Naive thymus-derived CD4-positive, alpha-beta T cell (primary cell): ENCODE measurements at regions of chr2 and their contacts with region 1.

Region 1: DNA sequence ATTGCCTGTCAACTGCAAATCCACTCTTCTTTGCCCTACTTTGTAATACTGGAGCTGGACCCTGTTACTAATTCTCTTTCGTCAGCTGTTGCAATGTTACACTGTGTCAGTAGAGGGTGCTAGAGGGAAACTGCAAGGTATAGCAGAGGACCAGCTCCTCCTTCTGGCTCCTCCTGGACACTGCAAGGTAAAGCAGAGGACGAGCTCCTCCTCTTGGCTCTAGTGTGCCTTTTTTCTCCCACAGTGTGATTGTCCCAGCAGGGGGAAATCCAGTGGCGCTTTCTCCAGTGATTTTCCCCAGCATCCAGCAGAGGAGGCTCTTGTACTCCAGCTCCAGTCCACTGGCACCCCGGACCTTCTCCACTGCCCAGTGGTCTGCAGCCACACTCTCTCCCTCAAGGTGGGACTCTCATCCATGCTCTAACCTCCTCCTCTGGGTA is 95.6 kb downstream of the CAPN13 start:
- DNase-seq: peak; percentile 50 to 89 (median 86)
- ATAC-seq: peak; percentile 96
- H3K4me3 ChIP-seq: no peak overlapping the region
- H3K4me3 Mint-ChIP-seq: no peak overlapping the region
- H3K27ac ChIP-seq: no peak overlapping the region
- H3K27ac Mint-ChIP-seq: peak overlapping the region in 1 of 9 donors; percentile 8
- H3K4me1 ChIP-seq: no peaks in the 10 kb centered on the region
- H3K4me1 Mint-ChIP-seq: peaks cover 0 to 8% (median 5%) of the 10 kb centered on the region in 7 donors
- H3K27me3 ChIP-seq: no peaks in the 10 kb centered on the region
- H3K27me3 Mint-ChIP-seq: peaks cover 0 to 4% (median 0%) of the 10 kb centered on the region in 5 donors

Region 2: DNA sequence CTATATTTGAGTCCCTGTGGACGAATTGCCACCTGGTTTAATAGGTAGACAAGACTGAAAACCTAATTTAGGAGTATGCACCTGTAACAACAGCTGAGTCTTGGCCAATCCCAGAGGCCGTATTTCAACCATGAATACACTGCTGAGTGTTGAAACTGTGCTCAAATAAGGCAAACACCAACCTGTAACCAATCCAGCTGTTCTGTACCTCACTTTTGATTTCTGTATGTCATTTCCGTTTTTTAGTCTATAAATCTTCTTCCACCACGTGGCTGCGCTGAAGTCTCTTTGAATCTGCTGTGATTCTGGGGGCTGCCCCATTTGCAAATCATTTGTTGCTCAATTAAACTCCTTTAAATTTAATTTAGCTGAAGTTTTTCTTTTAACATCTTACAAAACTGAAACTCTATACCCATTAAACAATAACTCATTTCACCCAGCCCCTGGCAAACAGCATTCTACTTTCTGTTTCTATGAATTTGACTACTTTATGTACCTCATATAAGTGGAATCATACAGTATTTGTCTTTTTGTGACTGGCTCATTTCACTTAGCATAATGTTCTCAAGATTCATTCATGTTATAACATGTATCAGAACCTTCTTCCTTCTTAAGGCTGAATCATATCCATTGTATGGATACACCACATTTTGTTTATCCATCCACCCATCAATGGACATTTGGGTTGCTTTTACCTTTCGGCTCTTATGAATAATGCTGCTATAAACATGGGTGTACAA is 572.4 kb before region 1 on chr2:
- CTCF ChIA-PET with region 1: interaction called, 14 read pairs
- POLR2A ChIA-PET with region 1: no interaction called
- intact Hi-C with region 1: loop called in 1 of 2 experiments (anchors 2 kb)
- DNase-seq: peak in 7 of 9 donors; percentile 45 to 71 (median 63)
- ATAC-seq: peak; percentile 77
- H3K4me3 ChIP-seq: no peak overlapping the region
- H3K4me3 Mint-ChIP-seq: peak overlapping the region in 8 of 10 donors; percentile 1 to 59 (median 45)
- H3K27ac ChIP-seq: peak overlapping the region; percentile 42
- H3K27ac Mint-ChIP-seq: peak overlapping the region; percentile 57 to 83 (median 66)
- H3K4me1 ChIP-seq: peaks cover 0 to 10% of the 10 kb centered on the region in 2 donors
- H3K4me1 Mint-ChIP-seq: peaks cover 12 to 32% (median 21%) of the 10 kb centered on the region in 7 donors
- H3K27me3 ChIP-seq: no peaks in the 10 kb centered on the region
- H3K27me3 Mint-ChIP-seq: peaks cover 0 to 13% (median 0%) of the 10 kb centered on the region in 5 donors

Region 3: GRCh38 chr2:30208452-30208851 is 503.2 kb before region 1 on chr2:
- CTCF ChIA-PET with region 1: interaction called, 189 read pairs
- POLR2A ChIA-PET with region 1: interaction called, 11 read pairs
- intact Hi-C with region 1: loop called (anchors 1 kb)
- DNase-seq: peak in 4 of 9 donors; percentile 19 to 42 (median 28)
- ATAC-seq: peak; percentile 69
- H3K4me3 ChIP-seq: peak overlapping the region; percentile 3
- H3K4me3 Mint-ChIP-seq: peak overlapping the region; percentile 14 to 80 (median 68)
- H3K27ac ChIP-seq: peak overlapping the region; percentile 25
- H3K27ac Mint-ChIP-seq: peak overlapping the region in 8 of 9 donors; percentile 82 to 95 (median 88)
- H3K4me1 ChIP-seq: peaks cover 8 to 33% of the 10 kb centered on the region in 2 donors
- H3K4me1 Mint-ChIP-seq: peaks cover 14 to 44% (median 35%) of the 10 kb centered on the region in 7 donors
- H3K27me3 ChIP-seq: no peaks in the 10 kb centered on the region
- H3K27me3 Mint-ChIP-seq: peaks cover 0 to 7% (median 0%) of the 10 kb centered on the region in 5 donors

Region 4: GRCh38 chr2:30336978-30337841 is 374.5 kb before region 1 on chr2:
- CTCF ChIA-PET with region 1: interaction called, 13 read pairs
- POLR2A ChIA-PET with region 1: no interaction called
- intact Hi-C with region 1: loop called (anchors 1 to 10 kb)
- DNase-seq: peak; percentile 11 to 74 (median 69)
- ATAC-seq: peak; percentile 89
- H3K4me3 ChIP-seq: peak overlapping the region; percentile 46
- H3K4me3 Mint-ChIP-seq: peak overlapping the region; percentile 69 to 92 (median 85)
- H3K27ac ChIP-seq: peak overlapping the region; percentile 71
- H3K27ac Mint-ChIP-seq: peak overlapping the region; percentile 95 to 100 (median 98)
- H3K4me1 ChIP-seq: peaks cover 60 to 71% of the 10 kb centered on the region in 2 donors
- H3K4me1 Mint-ChIP-seq: peaks cover 57 to 87% (median 84%) of the 10 kb centered on the region in 7 donors
- H3K27me3 ChIP-seq: no peaks in the 10 kb centered on the region
- H3K27me3 Mint-ChIP-seq: no peaks in the 10 kb centered on the region

Region 5: GRCh38 chr2:30862054-30862651 is 150.5 kb after region 1 on chr2:
- CTCF ChIA-PET with region 1: interaction called, 10 read pairs
- POLR2A ChIA-PET with region 1: no interaction called
- intact Hi-C with region 1: loop called in 1 of 2 experiments (anchors 1 kb)
- DNase-seq: peak in 6 of 9 donors; percentile 2 to 40 (median 26)
- ATAC-seq: peak; percentile 73
- H3K4me3 ChIP-seq: no peak overlapping the region
- H3K4me3 Mint-ChIP-seq: no peak overlapping the region
- H3K27ac ChIP-seq: no peak overlapping the region
- H3K27ac Mint-ChIP-seq: no peak overlapping the region
- H3K4me1 ChIP-seq: no peaks in the 10 kb centered on the region
- H3K4me1 Mint-ChIP-seq: peaks cover 0 to 14% (median 2%) of the 10 kb centered on the region in 7 donors
- H3K27me3 ChIP-seq: no peaks in the 10 kb centered on the region
- H3K27me3 Mint-ChIP-seq: peaks cover 6 to 21% (median 11%) of the 10 kb centered on the region in 5 donors

Region 6: GRCh38 chr2:31413862-31414550 is 702.3 kb after region 1 on chr2:
- CTCF ChIA-PET with region 1: no interaction called
- POLR2A ChIA-PET with region 1: no interaction called
- intact Hi-C with region 1: loop called in 1 of 2 experiments (anchors 10 kb)
- DNase-seq: no peak
- ATAC-seq: no peak
- H3K4me3 ChIP-seq: no peak overlapping the region
- H3K4me3 Mint-ChIP-seq: no peak overlapping the region
- H3K27ac ChIP-seq: no peak overlapping the region
- H3K27ac Mint-ChIP-seq: no peak overlapping the region
- H3K4me1 ChIP-seq: no peaks in the 10 kb centered on the region
- H3K4me1 Mint-ChIP-seq: peaks cover 0 to 13% (median 2%) of the 10 kb centered on the region in 7 donors
- H3K27me3 ChIP-seq: no peaks in the 10 kb centered on the region
- H3K27me3 Mint-ChIP-seq: peaks cover 0 to 26% (median 12%) of the 10 kb centered on the region in 5 donors